Activated naive CD4-positive, alpha-beta T cell treated with anti-CD3 and anti-CD28 coated beads, Interleukin-2, amount 10 ng/mL, durations not matched to agents 7 days and 5 days (primary cell): ENCODE measurements at regions of chr5 and their contacts with region 1.

Region 1: DNA sequence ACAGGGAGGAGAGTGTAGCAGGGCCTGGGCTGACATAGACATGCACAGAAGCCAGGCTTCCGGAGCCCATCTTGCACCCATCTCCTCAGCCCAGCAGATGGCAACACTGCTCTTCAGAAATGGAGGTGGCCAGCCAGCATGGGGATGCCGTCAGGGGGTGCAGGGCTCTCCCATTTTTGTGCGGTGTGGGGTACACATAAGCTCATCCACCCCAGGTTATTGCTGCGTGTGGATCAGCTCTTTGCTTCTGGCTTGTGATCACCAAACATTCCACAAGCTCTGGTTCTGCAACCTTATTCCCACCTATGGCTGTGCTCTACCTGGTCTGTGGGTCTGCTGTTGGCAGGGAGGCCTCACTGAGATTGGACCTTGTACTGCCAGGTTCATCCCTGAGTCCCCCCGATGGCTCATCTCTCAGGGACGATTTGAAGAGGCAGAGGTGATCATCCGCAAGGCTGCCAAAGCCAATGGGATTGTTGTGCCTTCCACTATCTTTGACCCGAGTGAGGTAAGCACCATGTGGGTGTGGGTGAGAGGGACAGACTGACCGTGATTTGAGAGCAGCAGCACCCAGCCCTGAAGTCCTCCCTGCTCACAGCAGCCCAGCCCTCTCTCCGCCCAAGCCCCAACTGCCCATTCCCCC is 17.3 kb downstream of the SLC22A5 start:
- DNase-seq: peak; percentile 87
- H3K4me3 Mint-ChIP-seq: no peak overlapping the region
- H3K27ac Mint-ChIP-seq: peak overlapping the region; percentile 78
- H3K4me1 Mint-ChIP-seq: peaks cover 56% of the 10 kb centered on the region
- H3K27me3 Mint-ChIP-seq: no peaks in the 10 kb centered on the region

Region 2: GRCh38 chr5:132243366-132243977 is 143.3 kb before region 1 on chr5:
- CTCF ChIA-PET with region 1: no interaction called
- DNase-seq: no peak
- H3K4me3 Mint-ChIP-seq: no peak overlapping the region
- H3K27ac Mint-ChIP-seq: no peak overlapping the region
- H3K4me1 Mint-ChIP-seq: no peaks in the 10 kb centered on the region
- H3K27me3 Mint-ChIP-seq: peaks cover 48% of the 10 kb centered on the region

Region 3: GRCh38 chr5:132397224-132397623 is 10.5 kb after region 1 on chr5:
- CTCF ChIA-PET with region 1: interaction called, 10 read pairs
- DNase-seq: peak; percentile 32
- H3K4me3 Mint-ChIP-seq: no peak overlapping the region
- H3K27ac Mint-ChIP-seq: peak overlapping the region; percentile 88
- H3K4me1 Mint-ChIP-seq: peaks cover 89% of the 10 kb centered on the region
- H3K27me3 Mint-ChIP-seq: no peaks in the 10 kb centered on the region

Region 4: GRCh38 chr5:132410451-132411381 is 24.0 kb after region 1 on chr5:
- CTCF ChIA-PET with region 1: interaction called, 16 read pairs
- DNase-seq: peak; percentile 94
- H3K4me3 Mint-ChIP-seq: peak overlapping the region; percentile 97
- H3K27ac Mint-ChIP-seq: peak overlapping the region; percentile 100
- H3K4me1 Mint-ChIP-seq: peaks cover 70% of the 10 kb centered on the region
- H3K27me3 Mint-ChIP-seq: no peaks in the 10 kb centered on the region

Region 5: GRCh38 chr5:132433141-132433540 is 46.4 kb after region 1 on chr5:
- CTCF ChIA-PET with region 1: no interaction called
- DNase-seq: no peak
- H3K4me3 Mint-ChIP-seq: no peak overlapping the region
- H3K27ac Mint-ChIP-seq: no peak overlapping the region
- H3K4me1 Mint-ChIP-seq: peaks cover 93% of the 10 kb centered on the region
- H3K27me3 Mint-ChIP-seq: no peaks in the 10 kb centered on the region

Region 6: GRCh38 chr5:132473019-132473531 is 86.3 kb after region 1 on chr5:
- CTCF ChIA-PET with region 1: interaction called, 10 read pairs
- DNase-seq: peak; percentile 94
- H3K4me3 Mint-ChIP-seq: peak overlapping the region; percentile 16
- H3K27ac Mint-ChIP-seq: peak overlapping the region; percentile 95
- H3K4me1 Mint-ChIP-seq: peaks cover 95% of the 10 kb centered on the region
- H3K27me3 Mint-ChIP-seq: no peaks in the 10 kb centered on the region

Region 7: GRCh38 chr5:132495667-132496190 is 109.0 kb after region 1 on chr5:
- CTCF ChIA-PET with region 1: interaction called, 458 read pairs
- DNase-seq: peak; percentile 86
- H3K4me3 Mint-ChIP-seq: peak overlapping the region; percentile 95
- H3K27ac Mint-ChIP-seq: peak overlapping the region; percentile 99
- H3K4me1 Mint-ChIP-seq: peaks cover 77% of the 10 kb centered on the region
- H3K27me3 Mint-ChIP-seq: no peaks in the 10 kb centered on the region

Region 8: DNA sequence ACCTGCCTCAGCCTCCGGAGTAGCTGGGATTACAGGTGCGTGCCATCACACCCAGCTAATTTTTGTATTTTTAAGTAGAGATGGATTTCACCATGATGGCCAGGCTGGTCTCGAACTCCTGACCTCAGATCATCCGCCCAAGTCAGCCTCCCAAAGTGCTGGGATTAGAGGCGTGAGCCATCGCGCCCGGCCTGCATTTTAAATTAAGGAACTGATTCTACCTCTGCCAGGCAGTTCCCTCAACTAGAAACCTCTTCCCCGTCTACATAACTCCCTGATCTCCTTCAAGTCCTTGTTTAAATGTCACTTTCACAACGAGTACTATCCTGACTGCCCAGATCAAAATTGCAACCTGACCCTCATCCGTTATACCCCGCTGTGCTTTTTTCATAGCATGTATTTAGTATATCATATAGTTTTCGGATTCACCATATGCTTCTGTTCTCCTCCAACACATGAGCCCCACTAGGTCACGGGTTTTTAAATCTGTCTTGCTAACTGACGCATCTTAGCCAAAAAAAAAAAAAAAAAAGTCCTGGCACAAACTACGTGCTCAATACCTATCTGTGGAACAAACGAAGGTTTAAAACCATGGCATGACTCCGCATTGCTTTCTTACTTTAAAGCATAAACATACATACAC is 425.5 kb after region 1 on chr5:
- CTCF ChIA-PET with region 1: no interaction called
- DNase-seq: no peak
- H3K4me3 Mint-ChIP-seq: peak overlapping the region; percentile 64
- H3K27ac Mint-ChIP-seq: no peak overlapping the region
- H3K4me1 Mint-ChIP-seq: peaks cover 10% of the 10 kb centered on the region
- H3K27me3 Mint-ChIP-seq: peaks cover 72% of the 10 kb centered on the region